ENCODE measurements at regions of chr11 and their contacts with region 1.

Region 1: DNA sequence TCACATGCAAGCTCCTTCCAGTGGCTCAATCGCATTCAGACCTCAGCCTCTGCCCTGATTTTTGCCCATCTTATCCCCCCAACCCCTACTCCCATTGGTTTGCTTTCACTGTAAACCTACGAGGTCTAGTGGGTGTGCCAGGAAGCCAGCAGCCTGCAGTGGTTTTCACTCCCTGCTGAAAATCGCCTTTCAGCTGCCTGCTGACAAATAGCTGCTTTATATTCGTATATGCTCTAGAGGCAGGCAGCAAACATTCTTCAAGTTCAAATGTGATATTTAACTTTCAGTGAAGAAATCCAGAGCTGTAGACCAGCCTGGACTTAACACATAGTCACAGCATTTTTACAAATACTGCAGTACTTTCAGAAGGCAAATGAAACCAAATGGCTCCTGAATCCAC is 92.8 kb upstream of the APOA1 start:
- DNase-seq: peak; percentile 70
- H3K4me3 Mint-ChIP-seq: peak overlapping the region; percentile 81
- H3K27ac Mint-ChIP-seq: peak overlapping the region; percentile 92
- H3K4me1 Mint-ChIP-seq: peaks cover 83% of the 10 kb centered on the region
- H3K27me3 Mint-ChIP-seq: no peaks in the 10 kb centered on the region

Region 2: DNA sequence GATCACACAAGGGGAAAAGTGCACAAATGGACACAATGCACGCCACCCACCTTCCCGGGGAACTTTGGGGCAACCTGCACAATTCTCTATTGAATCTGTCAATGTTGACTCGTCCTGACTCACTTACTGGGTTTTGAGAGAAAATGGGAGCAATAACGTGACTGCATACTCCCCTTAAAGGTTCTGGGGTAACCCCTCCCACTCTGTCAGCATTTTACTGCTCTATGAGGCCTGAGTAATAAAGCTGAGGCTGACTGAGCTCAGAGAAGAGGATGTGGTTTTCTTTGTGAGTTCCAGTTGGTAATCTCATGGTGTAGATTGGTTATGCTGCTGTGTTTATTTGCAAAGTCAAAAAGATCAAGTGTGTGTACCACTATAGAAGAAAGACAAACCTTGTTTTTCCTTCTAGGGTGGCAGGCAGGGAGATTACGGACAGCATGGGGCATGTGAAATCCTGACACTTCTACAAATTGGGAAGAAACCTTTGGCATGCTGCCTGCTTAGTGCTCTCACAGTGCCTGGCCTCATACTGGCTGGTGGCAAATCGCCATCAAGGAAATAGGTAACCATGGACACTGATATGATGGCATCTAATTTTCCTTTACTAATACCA is 76.6 kb before region 1 on chr11:
- CTCF ChIA-PET with region 1: no interaction called
- DNase-seq: peak; percentile 73
- H3K4me3 Mint-ChIP-seq: peak overlapping the region; percentile 2
- H3K27ac Mint-ChIP-seq: peak overlapping the region; percentile 96
- H3K4me1 Mint-ChIP-seq: peaks cover 74% of the 10 kb centered on the region
- H3K27me3 Mint-ChIP-seq: no peaks in the 10 kb centered on the region

Region 3: DNA sequence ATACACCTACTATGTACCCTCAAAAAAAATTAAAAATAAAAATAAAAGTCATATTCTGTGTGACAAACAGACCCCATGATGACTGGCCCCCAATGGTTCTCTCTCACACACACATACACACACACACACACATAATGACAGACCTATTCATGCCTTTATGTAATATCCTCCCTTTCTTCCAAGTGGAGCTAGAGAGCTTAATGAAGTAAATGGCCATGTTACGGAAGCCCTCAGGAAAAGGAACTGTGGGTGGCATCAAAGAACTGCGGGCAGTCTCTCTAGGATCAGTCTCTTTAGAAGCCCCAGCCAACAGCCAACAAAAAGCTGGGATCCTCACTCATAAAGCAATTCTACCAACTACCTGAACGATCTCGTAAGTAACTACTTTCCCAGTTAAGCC is 42.5 kb after region 1 on chr11:
- CTCF ChIA-PET with region 1: no interaction called
- DNase-seq: no peak
- H3K4me3 Mint-ChIP-seq: no peak overlapping the region
- H3K27ac Mint-ChIP-seq: no peak overlapping the region
- H3K4me1 Mint-ChIP-seq: peaks cover 7% of the 10 kb centered on the region
- H3K27me3 Mint-ChIP-seq: no peaks in the 10 kb centered on the region

Region 4: GRCh38 chr11:117098269-117099232 is 168.4 kb after region 1 on chr11 and contains the start of gene SIK3:
- CTCF ChIA-PET with region 1: interaction called, 20 read pairs
- DNase-seq: peak; percentile 93
- H3K4me3 Mint-ChIP-seq: peak within 1 kb of the TSS; percentile 91
- H3K27ac Mint-ChIP-seq: peak within 1 kb of the TSS; percentile 85
- H3K4me1 Mint-ChIP-seq: peaks cover 46% of the 10 kb centered on the region
- H3K27me3 Mint-ChIP-seq: no peaks in the 10 kb centered on the region